ENCODE measurements at regions of chr4 and their contacts with region 1.

Region 1: GRCh38 chr4:118772081-118772766 is 63.7 kb downstream of the SEC24D start:
- DNase-seq: no peak
- ATAC-seq: peak; percentile 78

Region 2: DNA sequence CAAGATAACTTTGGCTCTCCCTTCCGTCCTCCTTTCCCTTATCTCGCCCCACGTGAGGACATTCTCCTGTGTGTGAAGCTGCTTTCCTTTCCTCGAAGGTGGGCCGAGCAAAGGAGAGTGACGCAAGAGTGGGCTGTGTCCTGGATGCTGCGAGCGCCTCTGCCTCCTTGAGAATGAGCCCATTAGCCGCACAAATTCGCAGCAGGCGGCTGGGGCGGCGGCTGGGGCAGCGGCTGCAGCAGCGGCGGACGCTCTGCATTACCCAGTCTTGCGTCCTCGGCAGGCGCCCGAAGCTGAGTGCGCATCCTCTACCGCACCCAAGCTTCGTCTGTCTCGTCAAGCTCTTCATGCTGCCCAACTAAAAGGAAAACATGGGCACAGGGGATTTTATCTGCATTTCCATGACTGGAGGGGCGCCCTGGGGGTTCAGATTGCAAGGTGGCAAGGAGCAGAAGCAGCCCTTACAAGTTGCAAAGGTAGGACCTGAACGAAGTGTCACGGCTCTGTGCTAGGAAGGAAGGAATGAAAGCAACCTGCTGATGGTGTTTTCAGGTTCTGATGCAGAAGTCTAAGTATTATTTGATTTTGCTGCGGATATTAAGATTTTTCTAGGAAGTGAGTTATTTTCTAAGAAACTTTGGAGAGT is 116.6 kb after region 1 on chr4 and contains the start of gene SYNPO2:
- intact Hi-C with region 1: loop called (anchors 10 kb)
- DNase-seq: peak; percentile 88
- ATAC-seq: peak; percentile 88
- total RNA-seq, gene SYNPO2: 188 TPM

Measured in left ventricle myocardium superior (tissue), 1 donor.